Esophagus muscularis mucosa (tissue), 4 donors: ENCODE measurements at regions of chr11 and their contacts with region 1.

Region 1: GRCh38 chr11:65512306-65512705 is 12.6 kb upstream of the SCYL1 start:
- DNase-seq: no peak
- H3K4me3 ChIP-seq: no peak overlapping the region
- H3K27ac ChIP-seq: no peak overlapping the region
- H3K4me1 ChIP-seq: peaks cover 14 to 29% (median 24%) of the 10 kb centered on the region in 4 donors
- H3K27me3 ChIP-seq: no peaks in the 10 kb centered on the region
- CTCF ChIP-seq: no peak
- EP300 ChIP-seq: no peak
- POLR2A ChIP-seq: no peak

Region 2: GRCh38 chr11:65366340-65366773 is 145.9 kb before region 1 on chr11:
- intact Hi-C with region 1: loop called (anchors 5 kb)
- DNase-seq: no peak
- H3K4me3 ChIP-seq: no peak overlapping the region
- H3K27ac ChIP-seq: no peak overlapping the region
- H3K4me1 ChIP-seq: peaks cover 7 to 11% (median 8%) of the 10 kb centered on the region in 4 donors
- H3K27me3 ChIP-seq: no peaks in the 10 kb centered on the region
- CTCF ChIP-seq: peak; percentile 73 to 90 (median 86)
- EP300 ChIP-seq: no peak
- POLR2A ChIP-seq: no peak

Region 3: GRCh38 chr11:65382033-65382807 is 130.1 kb before region 1 on chr11 and contains the start of gene SLC25A45:
- intact Hi-C with region 1: loop called (anchors 5 kb)
- DNase-seq: peak; percentile 98
- H3K4me3 ChIP-seq: peak within 1 kb of the TSS; percentile 55 to 62 (median 56)
- H3K27ac ChIP-seq: peak within 1 kb of the TSS; percentile 95 to 98 (median 96)
- H3K4me1 ChIP-seq: peaks cover 56 to 62% (median 59%) of the 10 kb centered on the region in 4 donors
- H3K27me3 ChIP-seq: no peaks in the 10 kb centered on the region
- CTCF ChIP-seq: peak; percentile 88 to 98 (median 90)
- EP300 ChIP-seq: no peak
- POLR2A ChIP-seq: no peak
- total RNA-seq, gene SLC25A45: 4.6 to 11.3 (median 5.9) TPM